CD8-positive, alpha-beta memory T cell (primary cell): ENCODE measurements at regions of chr1 and their contacts with region 1.

Region 1: DNA sequence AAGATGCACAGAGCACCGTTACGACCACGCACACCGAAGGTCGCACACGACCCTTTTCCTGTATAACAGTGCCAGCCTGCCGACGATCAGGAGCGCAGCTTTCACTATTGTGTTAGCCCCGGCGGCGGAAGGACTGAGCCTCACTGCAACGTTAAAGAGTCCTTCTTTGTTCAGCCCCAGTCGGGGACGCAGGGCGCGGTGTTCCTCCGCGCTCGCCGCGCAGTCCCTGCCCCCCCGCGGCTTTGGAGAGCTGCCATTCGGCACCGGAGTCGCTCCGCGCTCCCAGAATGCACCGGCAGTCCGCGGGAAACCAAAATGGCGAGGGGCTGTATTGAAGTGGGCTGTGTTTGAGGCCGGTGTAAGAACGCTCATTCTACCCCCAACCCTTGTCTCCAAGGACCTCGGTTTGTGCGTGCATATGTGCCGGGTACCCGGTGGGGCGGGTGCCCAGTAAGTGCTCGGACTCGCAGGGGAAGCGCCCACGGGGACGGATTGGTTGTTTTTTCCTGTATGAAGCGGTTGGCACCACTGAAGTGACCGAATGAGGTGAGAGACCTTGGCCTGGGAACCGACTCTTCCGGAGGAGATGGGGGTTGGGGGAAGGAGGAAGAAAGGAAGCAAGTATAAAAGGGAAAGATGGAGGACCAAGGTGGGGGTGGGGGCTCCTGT is at the start of gene MTF2:
- DNase-seq: peak; percentile 85 to 94 (median 89)
- H3K4me3 ChIP-seq: peak within 1 kb of the TSS; percentile 96
- H3K4me3 Mint-ChIP-seq: peak within 1 kb of the TSS; percentile 86 to 98 (median 94)
- H3K27ac ChIP-seq: peak within 1 kb of the TSS; percentile 84
- H3K27ac Mint-ChIP-seq: peak within 1 kb of the TSS; percentile 91 to 99 (median 94)
- H3K4me1 ChIP-seq: peaks cover 42% of the 10 kb centered on the region
- H3K4me1 Mint-ChIP-seq: peaks cover 46 to 63% (median 62%) of the 10 kb centered on the region in 3 donors
- H3K27me3 ChIP-seq: no peaks in the 10 kb centered on the region
- H3K27me3 Mint-ChIP-seq: no peaks in the 10 kb centered on the region
- total RNA-seq, gene MTF2: 42.1 to 43.4 TPM

Region 2: GRCh38 chr1:92922356-92923035 is 156.6 kb before region 1 on chr1:
- CTCF ChIA-PET with region 1: no interaction called
- POLR2A ChIA-PET with region 1: no interaction called
- DNase-seq: no peak
- H3K4me3 ChIP-seq: no peak overlapping the region
- H3K4me3 Mint-ChIP-seq: no peak overlapping the region
- H3K27ac ChIP-seq: no peak overlapping the region
- H3K27ac Mint-ChIP-seq: no peak overlapping the region
- H3K4me1 ChIP-seq: no peaks in the 10 kb centered on the region
- H3K4me1 Mint-ChIP-seq: peaks cover 12 to 26% (median 15%) of the 10 kb centered on the region in 3 donors
- H3K27me3 ChIP-seq: no peaks in the 10 kb centered on the region
- H3K27me3 Mint-ChIP-seq: no peaks in the 10 kb centered on the region

Region 3: DNA sequence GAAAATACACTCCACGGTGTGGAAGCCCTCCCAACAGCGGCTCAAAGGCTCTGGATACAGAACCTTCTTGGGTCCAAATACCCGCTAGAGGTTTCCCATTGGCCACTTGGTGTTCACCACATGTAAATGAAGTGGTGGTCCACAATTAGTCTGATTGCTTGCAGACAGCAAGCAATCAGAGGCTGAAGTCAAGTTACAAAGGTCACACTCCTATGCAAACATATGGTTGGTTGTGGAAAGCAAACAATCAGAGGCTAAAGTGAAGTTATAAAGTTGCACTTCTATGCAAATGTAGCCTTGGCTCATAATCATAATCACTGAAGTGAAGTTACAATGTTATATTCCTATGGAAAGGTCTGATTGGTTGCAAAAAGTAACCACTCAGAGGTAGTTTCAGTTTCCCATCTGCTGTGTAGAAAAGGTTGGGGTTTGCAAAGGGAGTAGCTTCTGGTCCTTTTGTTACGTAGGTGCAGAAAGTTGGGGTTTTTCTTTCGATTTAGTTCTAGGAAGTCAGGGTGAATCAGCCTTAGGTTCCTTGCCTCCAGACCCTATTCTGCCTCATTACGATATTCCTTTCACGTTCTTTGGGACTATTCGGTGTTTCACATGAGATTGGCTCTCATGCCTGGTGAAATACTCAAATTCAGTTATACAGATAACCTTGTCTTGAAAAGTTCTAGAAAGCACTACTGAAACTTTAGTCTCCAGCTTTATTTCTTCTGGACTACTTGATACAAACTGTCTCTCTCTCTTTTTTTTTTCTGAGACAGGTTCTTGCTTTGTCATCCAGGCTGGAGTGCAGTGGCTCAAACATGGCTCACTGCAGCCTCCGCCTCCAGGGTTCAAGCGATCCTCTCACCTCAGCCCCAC is 36.7 kb before region 1 on chr1:
- CTCF ChIA-PET with region 1: interaction called, 4 read pairs
- POLR2A ChIA-PET with region 1: interaction called, 10 read pairs
- DNase-seq: peak in 4 of 5 donors; percentile 24 to 77 (median 64)
- H3K4me3 ChIP-seq: peak overlapping the region; percentile 59
- H3K4me3 Mint-ChIP-seq: peak overlapping the region; percentile 59 to 93 (median 86)
- H3K27ac ChIP-seq: peak overlapping the region; percentile 52
- H3K27ac Mint-ChIP-seq: peak overlapping the region; percentile 57 to 99 (median 95)
- H3K4me1 ChIP-seq: peaks cover 12% of the 10 kb centered on the region
- H3K4me1 Mint-ChIP-seq: peaks cover 12 to 14% (median 13%) of the 10 kb centered on the region in 3 donors
- H3K27me3 ChIP-seq: no peaks in the 10 kb centered on the region
- H3K27me3 Mint-ChIP-seq: no peaks in the 10 kb centered on the region

Region 4: GRCh38 chr1:93061895-93062792 is 17.0 kb before region 1 on chr1:
- CTCF ChIA-PET with region 1: interaction called, 15 read pairs
- POLR2A ChIA-PET with region 1: interaction called, 4 read pairs
- DNase-seq: peak; percentile 9 to 63 (median 33)
- H3K4me3 ChIP-seq: no peak overlapping the region
- H3K4me3 Mint-ChIP-seq: no peak overlapping the region
- H3K27ac ChIP-seq: no peak overlapping the region
- H3K27ac Mint-ChIP-seq: peak overlapping the region in 1 of 8 donors; percentile 6
- H3K4me1 ChIP-seq: no peaks in the 10 kb centered on the region
- H3K4me1 Mint-ChIP-seq: no peaks in the 10 kb centered on the region
- H3K27me3 ChIP-seq: no peaks in the 10 kb centered on the region
- H3K27me3 Mint-ChIP-seq: peaks cover 23 to 47% of the 10 kb centered on the region in 2 donors

Region 5: GRCh38 chr1:93093332-93094006 is 14.3 kb after region 1 on chr1:
- CTCF ChIA-PET with region 1: interaction called, 10 read pairs
- POLR2A ChIA-PET with region 1: interaction called, 8 read pairs
- DNase-seq: no peak
- H3K4me3 ChIP-seq: no peak overlapping the region
- H3K4me3 Mint-ChIP-seq: peak overlapping the region in 2 of 7 donors; percentile 32 to 43
- H3K27ac ChIP-seq: no peak overlapping the region
- H3K27ac Mint-ChIP-seq: peak overlapping the region; percentile 3 to 85 (median 60)
- H3K4me1 ChIP-seq: peaks cover 13% of the 10 kb centered on the region
- H3K4me1 Mint-ChIP-seq: peaks cover 66 to 83% (median 78%) of the 10 kb centered on the region in 3 donors
- H3K27me3 ChIP-seq: no peaks in the 10 kb centered on the region
- H3K27me3 Mint-ChIP-seq: no peaks in the 10 kb centered on the region

Region 6: GRCh38 chr1:93171549-93172034 is 92.5 kb after region 1 on chr1:
- CTCF ChIA-PET with region 1: no interaction called
- POLR2A ChIA-PET with region 1: no interaction called
- DNase-seq: no peak
- H3K4me3 ChIP-seq: peak overlapping the region; percentile 37
- H3K4me3 Mint-ChIP-seq: peak overlapping the region; percentile 78 to 87 (median 83)
- H3K27ac ChIP-seq: no peak overlapping the region
- H3K27ac Mint-ChIP-seq: peak overlapping the region; percentile 15 to 90 (median 72)
- H3K4me1 ChIP-seq: peaks cover 43% of the 10 kb centered on the region
- H3K4me1 Mint-ChIP-seq: peaks cover 72 to 87% (median 82%) of the 10 kb centered on the region in 3 donors
- H3K27me3 ChIP-seq: no peaks in the 10 kb centered on the region
- H3K27me3 Mint-ChIP-seq: no peaks in the 10 kb centered on the region

Region 7: GRCh38 chr1:93304716-93305138 is 225.6 kb after region 1 on chr1:
- CTCF ChIA-PET with region 1: interaction called, 24 read pairs
- POLR2A ChIA-PET with region 1: no interaction called
- DNase-seq: peak in 4 of 5 donors; percentile 12 to 62 (median 36)
- H3K4me3 ChIP-seq: no peak overlapping the region
- H3K4me3 Mint-ChIP-seq: no peak overlapping the region
- H3K27ac ChIP-seq: no peak overlapping the region
- H3K27ac Mint-ChIP-seq: no peak overlapping the region
- H3K4me1 ChIP-seq: no peaks in the 10 kb centered on the region
- H3K4me1 Mint-ChIP-seq: peaks cover 0 to 4% (median 0%) of the 10 kb centered on the region in 3 donors
- H3K27me3 ChIP-seq: no peaks in the 10 kb centered on the region
- H3K27me3 Mint-ChIP-seq: no peaks in the 10 kb centered on the region